Tibial artery (tissue), 4 donors: ENCODE measurements at regions of chr3 and their contacts with region 1.

Region 1: GRCh38 chr3:99645277-99646106 is 7.1 kb downstream of the COL8A1 start:
- DNase-seq: no peak
- H3K4me3 ChIP-seq: peak overlapping the region; percentile 34 to 69
- H3K27ac ChIP-seq: peak overlapping the region; percentile 92 to 95
- H3K4me1 ChIP-seq: peaks cover 0 to 87% (median 19%) of the 10 kb centered on the region in 4 donors
- H3K27me3 ChIP-seq: no peaks in the 10 kb centered on the region
- CTCF ChIP-seq: peak; percentile 65 to 77

Region 2: DNA sequence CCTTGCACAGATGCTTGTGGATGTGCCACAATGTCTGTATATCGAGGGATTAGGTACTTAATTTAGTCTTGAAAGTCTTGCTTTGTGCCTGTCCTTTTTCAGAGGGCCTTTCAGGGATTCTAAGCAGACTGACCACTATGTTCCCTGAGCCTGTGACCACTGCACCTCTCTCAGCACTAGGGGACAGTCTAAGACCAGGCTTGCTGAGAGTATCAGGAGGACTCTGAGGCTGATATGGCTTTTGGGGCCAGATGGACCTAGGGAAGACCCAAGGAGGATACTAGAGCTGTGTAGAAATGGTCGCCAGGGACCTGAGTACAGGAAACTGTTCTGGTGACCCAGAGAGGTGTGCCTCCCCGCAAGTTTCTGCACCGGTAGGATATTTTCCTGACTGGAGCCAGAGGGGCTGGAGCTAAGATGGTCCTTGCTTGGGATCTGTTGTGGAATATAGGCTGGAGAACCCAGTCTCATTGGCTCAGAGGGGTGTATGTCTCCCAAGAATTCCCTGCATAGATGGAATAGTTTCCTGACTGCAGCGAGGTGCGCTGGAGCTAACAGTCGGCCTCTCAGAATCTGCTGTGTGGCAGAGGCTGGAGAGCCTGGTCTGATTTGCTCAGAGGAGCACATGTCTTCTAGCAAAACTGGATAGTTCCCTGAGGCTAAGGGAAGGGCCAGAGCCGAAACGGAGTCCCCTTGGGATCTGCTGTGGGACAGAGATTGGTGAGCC is 530.8 kb before region 1 on chr3:
- intact Hi-C with region 1: no loop called
- DNase-seq: no peak
- H3K4me3 ChIP-seq: no peak overlapping the region
- H3K27ac ChIP-seq: no peak overlapping the region
- H3K4me1 ChIP-seq: no peaks in the 10 kb centered on the region
- H3K27me3 ChIP-seq: no peaks in the 10 kb centered on the region
- CTCF ChIP-seq: no peak

Region 3: DNA sequence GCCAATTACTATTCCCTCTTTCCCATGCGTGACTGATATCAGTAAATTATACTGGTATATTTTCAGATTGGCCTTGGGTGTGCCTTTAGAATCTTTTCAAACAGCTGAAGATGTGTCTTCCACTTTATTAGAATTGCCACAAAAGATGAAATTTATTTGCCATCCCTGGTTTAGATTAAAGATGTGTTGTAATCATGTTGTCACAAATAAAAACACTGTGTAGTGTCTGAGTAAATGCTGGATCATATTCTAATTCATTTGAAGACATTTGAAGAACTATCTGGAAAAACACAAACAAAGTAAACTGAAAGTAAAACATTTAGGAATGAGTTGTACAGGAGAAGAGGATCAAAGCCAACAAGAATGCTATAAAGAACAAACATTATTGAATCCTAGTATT is 346.8 kb before region 1 on chr3:
- intact Hi-C with region 1: no loop called
- DNase-seq: no peak
- H3K4me3 ChIP-seq: no peak overlapping the region
- H3K27ac ChIP-seq: no peak overlapping the region
- H3K4me1 ChIP-seq: peaks cover 0 to 13% (median 0%) of the 10 kb centered on the region in 4 donors
- H3K27me3 ChIP-seq: no peaks in the 10 kb centered on the region
- CTCF ChIP-seq: no peak

Region 4: DNA sequence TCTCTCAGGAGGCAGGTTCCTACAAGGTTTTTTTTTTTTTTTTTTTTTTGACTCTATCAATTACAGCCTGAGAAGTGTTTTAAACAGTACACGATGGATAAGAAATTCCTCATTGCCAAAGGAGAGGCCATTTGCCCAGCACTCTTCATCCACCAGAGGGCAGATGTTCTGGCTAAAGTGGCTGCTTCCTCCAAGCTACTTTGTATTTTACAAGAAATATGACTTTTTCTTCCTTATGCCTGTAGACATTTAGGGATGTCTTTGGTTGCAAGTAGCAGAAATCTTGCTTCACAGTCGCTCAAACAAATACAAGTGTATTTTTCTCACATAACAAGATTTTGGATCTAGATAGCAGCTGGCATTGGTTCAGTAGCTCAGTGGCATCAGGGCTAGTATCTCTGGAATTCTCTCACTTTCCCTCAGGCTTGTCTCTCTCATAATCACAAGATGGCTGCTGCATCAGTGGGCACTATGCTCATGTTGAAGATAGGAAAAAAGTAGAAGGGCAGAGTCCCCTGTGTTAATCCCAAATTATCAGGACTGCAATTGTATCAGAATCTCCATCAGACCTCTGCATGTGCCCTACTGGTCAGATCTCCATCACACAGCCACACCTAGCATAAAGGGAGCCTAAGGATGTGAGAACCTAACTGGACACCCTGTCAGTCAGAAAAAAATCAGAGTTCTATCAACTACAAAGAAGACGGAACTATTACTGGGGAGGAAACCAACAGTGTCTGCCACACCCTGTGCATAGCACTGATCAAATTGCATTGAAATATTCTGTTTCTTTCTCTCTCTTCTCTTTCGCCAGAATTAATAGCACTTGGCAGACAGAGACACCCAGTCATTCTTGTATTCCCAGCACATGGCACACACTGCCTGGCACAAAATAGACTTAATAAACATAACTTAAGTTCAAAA is 146.0 kb before region 1 on chr3:
- intact Hi-C with region 1: loop called (anchors 10 kb)
- DNase-seq: peak; percentile 35 to 78
- H3K4me3 ChIP-seq: no peak overlapping the region
- H3K27ac ChIP-seq: peak overlapping the region; percentile 77 to 86
- H3K4me1 ChIP-seq: peaks cover 0 to 71% (median 28%) of the 10 kb centered on the region in 4 donors
- H3K27me3 ChIP-seq: no peaks in the 10 kb centered on the region
- CTCF ChIP-seq: peak; percentile 57 to 62

Region 5: DNA sequence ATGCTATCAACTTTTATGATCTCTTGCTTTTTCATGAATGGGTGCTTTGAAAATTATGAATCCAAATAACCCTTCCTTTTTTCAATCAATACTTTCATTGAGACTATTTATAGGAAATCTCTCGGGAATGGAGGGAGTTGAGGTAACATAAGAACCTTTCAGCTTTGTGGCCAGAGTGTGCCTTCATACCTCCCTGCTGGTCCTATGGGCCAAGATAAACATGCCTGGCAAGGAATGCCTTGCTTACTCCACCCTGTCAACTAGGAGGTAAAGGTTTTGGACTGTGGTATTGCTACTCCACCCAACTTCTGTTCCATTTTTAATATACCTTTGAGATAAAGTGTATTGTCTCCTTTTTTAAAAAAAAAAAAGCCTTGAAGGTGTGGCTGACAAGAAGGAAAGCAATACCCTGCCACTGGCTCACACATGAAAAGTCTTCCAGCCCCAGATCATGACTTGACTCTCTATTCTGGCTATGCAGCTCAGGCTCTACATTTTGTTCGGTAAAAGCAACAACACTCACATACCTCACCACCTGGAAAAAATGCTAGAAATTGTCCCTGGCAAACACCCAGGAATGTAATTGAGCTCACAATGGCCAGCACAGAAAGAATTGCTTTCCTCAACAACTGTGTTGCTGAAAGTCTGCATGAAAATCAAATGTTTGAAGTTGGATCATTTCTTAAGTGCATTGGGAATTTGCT is 28.7 kb after region 1 on chr3:
- intact Hi-C with region 1: loop called (anchors 2 kb)
- DNase-seq: peak in 1 of 2 donors; percentile 52
- H3K4me3 ChIP-seq: no peak overlapping the region
- H3K27ac ChIP-seq: peak overlapping the region; percentile 55 to 95
- H3K4me1 ChIP-seq: peaks cover 0 to 92% (median 31%) of the 10 kb centered on the region in 4 donors
- H3K27me3 ChIP-seq: no peaks in the 10 kb centered on the region
- CTCF ChIP-seq: no peak

Region 6: GRCh38 chr3:99686955-99687612 is 41.6 kb after region 1 on chr3:
- intact Hi-C with region 1: loop called (anchors 5 kb)
- DNase-seq: peak; percentile 64 to 81
- H3K4me3 ChIP-seq: no peak overlapping the region
- H3K27ac ChIP-seq: peak overlapping the region; percentile 61 to 69
- H3K4me1 ChIP-seq: peaks cover 0 to 92% (median 24%) of the 10 kb centered on the region in 4 donors
- H3K27me3 ChIP-seq: no peaks in the 10 kb centered on the region
- CTCF ChIP-seq: peak; percentile 61 to 71

Region 7: DNA sequence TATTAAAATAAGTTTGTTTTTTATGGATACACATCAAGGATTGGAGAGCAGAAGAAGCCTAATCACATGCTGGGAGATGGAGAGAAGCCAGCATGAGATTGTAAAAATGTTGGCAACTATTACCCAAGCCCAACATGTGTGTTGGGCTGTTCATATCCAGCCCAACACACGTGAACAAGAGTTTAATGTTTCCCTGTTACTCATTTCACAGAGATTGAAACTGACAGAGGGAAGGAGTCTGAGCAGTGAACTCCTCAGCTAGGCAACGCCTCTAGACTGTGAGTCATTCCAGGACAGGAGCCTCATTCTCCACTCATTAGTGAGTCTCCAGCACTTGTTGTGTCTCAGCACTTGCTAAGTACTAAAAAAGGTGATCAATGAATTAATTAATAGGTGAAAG is 129.0 kb after region 1 on chr3:
- intact Hi-C with region 1: no loop called
- DNase-seq: no peak
- H3K4me3 ChIP-seq: no peak overlapping the region
- H3K27ac ChIP-seq: peak overlapping the region in 1 of 2 donors; percentile 37
- H3K4me1 ChIP-seq: peaks cover 0 to 37% (median 5%) of the 10 kb centered on the region in 4 donors
- H3K27me3 ChIP-seq: no peaks in the 10 kb centered on the region
- CTCF ChIP-seq: no peak